Activated T-helper 2 cell treated with anti-CD3 and anti-CD28 coated beads, Interferon-gamma antibody, Interleukin-2, Interleukin-4, amounts not matched to agents 10 μg/mL and 5 μg/mL and 100 μg/mL, durations not matched to agents 14 hours and 24 hours and 36 hours (primary cell): ENCODE measurements at regions of chr12 and their contacts with region 1.

Region 1: GRCh38 chr12:69470189-69471075 is at the start of gene FRS2:
- DNase-seq: peak; percentile 77
- H3K4me3 Mint-ChIP-seq: peak within 1 kb of the TSS; percentile 98
- H3K27ac Mint-ChIP-seq: peak within 1 kb of the TSS; percentile 96
- H3K4me1 Mint-ChIP-seq: peaks cover 52% of the 10 kb centered on the region
- H3K27me3 Mint-ChIP-seq: no peaks in the 10 kb centered on the region
- total RNA-seq, gene FRS2: 10.8 and 11.4 TPM in 2 replicates

Region 2: DNA sequence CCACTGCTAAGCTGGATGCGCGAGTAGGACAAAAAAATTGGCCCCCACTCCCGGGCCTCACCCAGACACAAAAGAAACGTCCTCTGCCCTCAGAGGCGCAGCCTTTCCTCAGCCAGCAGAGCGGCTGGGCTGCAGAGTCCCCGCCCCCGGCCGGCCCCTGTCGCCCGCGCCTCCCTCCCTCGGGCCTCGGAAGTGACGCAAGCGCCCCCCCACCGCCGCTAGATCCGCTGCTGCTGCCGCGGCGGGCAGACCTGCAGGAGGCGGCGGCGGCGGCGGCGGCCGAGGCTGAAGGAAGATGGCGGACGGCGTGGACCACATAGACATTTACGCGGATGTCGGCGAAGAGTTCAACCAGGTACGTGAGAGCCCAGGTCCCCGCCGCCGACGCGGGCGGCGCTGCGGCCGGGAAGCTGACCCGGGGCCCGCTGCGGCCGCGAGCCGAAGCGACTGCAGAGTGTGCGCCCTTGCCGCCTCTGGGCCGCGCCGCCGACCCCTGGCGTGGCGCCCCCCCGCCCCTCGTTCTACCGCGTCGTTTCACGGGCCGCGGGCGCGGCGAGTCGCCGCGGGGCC is 231.0 kb before region 1 on chr12 and contains the start of gene CPSF6:
- intact Hi-C with region 1: loop called (anchors 1 kb)
- DNase-seq: peak; percentile 93
- H3K4me3 Mint-ChIP-seq: peak within 1 kb of the TSS; percentile 96
- H3K27ac Mint-ChIP-seq: peak within 1 kb of the TSS; percentile 96
- H3K4me1 Mint-ChIP-seq: peaks cover 36% of the 10 kb centered on the region
- H3K27me3 Mint-ChIP-seq: no peaks in the 10 kb centered on the region
- total RNA-seq, gene CPSF6: 107 and 119 TPM in 2 replicates

Region 3: GRCh38 chr12:69388371-69388770 is 82.1 kb before region 1 on chr12:
- intact Hi-C with region 1: loop called (anchors 5 kb)
- DNase-seq: no peak
- H3K4me3 Mint-ChIP-seq: no peak overlapping the region
- H3K27ac Mint-ChIP-seq: no peak overlapping the region
- H3K4me1 Mint-ChIP-seq: peaks cover 22% of the 10 kb centered on the region
- H3K27me3 Mint-ChIP-seq: no peaks in the 10 kb centered on the region

Region 4: DNA sequence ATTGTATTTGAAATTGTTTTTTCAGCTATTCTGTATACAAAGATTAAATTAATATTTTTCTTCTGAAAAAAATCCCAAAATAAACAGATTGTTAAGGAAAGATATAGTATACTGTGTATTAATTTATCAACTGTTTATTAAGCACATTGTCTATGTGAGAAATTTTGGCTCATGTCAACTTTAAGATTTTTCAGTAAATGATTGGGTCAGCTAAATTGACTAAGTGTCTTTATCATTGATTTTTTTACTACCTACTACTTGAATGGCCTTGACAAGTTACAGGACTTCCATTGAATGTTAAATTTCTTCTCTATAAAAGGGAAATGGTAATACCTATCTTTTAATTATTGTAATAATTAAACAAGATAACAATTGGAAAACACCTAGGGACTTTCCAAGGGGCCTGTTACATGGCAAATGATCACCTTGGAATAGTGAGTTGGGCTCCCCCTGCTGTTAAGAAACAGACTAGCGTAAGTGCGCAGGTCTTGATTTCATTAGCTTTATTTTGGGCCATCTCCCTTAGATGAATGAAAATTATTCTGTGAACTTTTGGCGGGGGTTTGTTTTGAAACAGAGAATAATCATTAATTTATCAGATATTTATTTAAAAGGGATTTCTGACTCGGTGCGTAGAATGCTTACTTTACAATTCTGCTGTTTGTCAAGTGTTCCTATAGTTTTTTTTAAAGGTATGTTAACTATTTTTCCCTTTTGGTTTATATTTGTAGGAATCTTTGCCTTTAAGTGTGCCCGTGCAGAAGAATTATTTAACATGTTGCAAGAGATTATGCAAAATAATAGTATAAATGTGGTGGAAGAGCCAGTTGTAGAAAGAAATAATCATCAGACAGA is 100.3 kb after region 1 on chr12:
- intact Hi-C with region 1: loop called (anchors 2 kb)
- DNase-seq: peak; percentile 23
- H3K4me3 Mint-ChIP-seq: no peak overlapping the region
- H3K27ac Mint-ChIP-seq: no peak overlapping the region
- H3K4me1 Mint-ChIP-seq: peaks cover 12% of the 10 kb centered on the region
- H3K27me3 Mint-ChIP-seq: no peaks in the 10 kb centered on the region

Region 5: GRCh38 chr12:69738351-69739286 is 268.2 kb after region 1 on chr12 and contains the start of gene RAB3IP:
- intact Hi-C with region 1: loop called (anchors 10 kb)
- DNase-seq: peak; percentile 87
- H3K4me3 Mint-ChIP-seq: peak within 1 kb of the TSS; percentile 81
- H3K27ac Mint-ChIP-seq: peak within 1 kb of the TSS; percentile 70
- H3K4me1 Mint-ChIP-seq: peaks cover 13% of the 10 kb centered on the region
- H3K27me3 Mint-ChIP-seq: peaks cover 33% of the 10 kb centered on the region
- total RNA-seq, gene RAB3IP: 29.8 and 37.7 TPM in 2 replicates